Left cardiac atrium (tissue), 4 donors: ENCODE measurements at regions of chr13 and their contacts with region 1.

Region 1: DNA sequence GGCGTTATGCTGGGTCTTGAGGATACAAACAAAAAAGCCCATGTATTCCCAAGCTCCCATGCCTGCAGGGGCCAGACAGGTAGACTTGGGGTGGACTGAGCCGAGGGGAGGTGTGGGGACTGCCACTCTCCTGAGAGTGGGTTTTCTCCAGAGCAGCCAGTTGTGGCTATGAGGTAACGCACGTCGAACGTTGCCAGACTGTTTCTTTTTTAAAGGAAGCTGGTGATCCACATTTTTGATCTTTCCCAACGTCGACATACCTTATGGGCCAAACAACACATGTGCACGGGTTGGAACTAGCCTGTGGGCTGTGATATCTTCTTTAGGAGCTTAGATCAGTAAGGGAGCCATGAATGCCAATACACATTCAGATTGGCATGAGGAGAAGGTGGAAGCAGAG is 60.6 kb downstream of the LMO7 start:
- DNase-seq: no peak
- ATAC-seq: no peak

Region 2: GRCh38 chr13:75285310-75285709 is 411.4 kb before region 1 on chr13:
- intact Hi-C with region 1: no loop called
- DNase-seq: no peak
- ATAC-seq: no peak

Region 3: GRCh38 chr13:75812751-75813181 is 116.0 kb after region 1 on chr13:
- intact Hi-C with region 1: loop called in 1 of 2 experiments (anchors 2 kb)
- DNase-seq: no peak
- ATAC-seq: peak; percentile 27 to 82